ENCODE measurements at regions of chr2 and their contacts with region 1.

Region 1: GRCh38 chr2:182186132-182186735 is 200.6 kb downstream of the PPP1R1C start:
- DNase-seq: peak in 1 of 2 donors; percentile 69
- H3K4me3 ChIP-seq: no peak overlapping the region
- H3K27ac ChIP-seq: no peak overlapping the region
- H3K4me1 ChIP-seq: no peaks in the 10 kb centered on the region
- H3K27me3 ChIP-seq: no peaks in the 10 kb centered on the region
- CTCF ChIP-seq: peak in 5 of 7 experiments; percentile 64 to 93 (median 81)
- EP300 ChIP-seq: no peak
- POLR2A ChIP-seq: no peak

Region 2: DNA sequence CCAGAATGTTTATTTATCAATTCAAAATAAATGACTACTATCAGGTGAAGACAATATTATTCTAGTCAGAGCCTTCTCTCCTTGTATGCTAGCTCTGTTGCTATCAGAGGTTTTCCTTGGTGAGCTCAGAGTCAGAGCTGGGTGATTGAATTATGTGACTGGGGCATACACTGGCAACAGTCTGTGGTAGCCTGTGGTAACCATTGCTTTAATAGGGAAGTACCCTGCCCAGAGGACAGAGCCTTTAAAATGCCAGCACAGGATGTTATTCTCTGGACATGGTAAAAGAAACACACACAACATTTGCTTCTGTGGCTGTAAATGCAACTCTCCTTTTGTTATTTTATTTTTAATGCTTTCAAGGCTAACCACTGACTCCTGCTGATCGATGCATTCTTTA is 75.9 kb before region 1 on chr2:
- intact Hi-C with region 1: no loop called
- DNase-seq: no peak
- H3K4me3 ChIP-seq: no peak overlapping the region
- H3K27ac ChIP-seq: no peak overlapping the region
- H3K4me1 ChIP-seq: no peaks in the 10 kb centered on the region
- H3K27me3 ChIP-seq: no peaks in the 10 kb centered on the region
- CTCF ChIP-seq: no peak
- EP300 ChIP-seq: no peak
- POLR2A ChIP-seq: no peak

Region 3: DNA sequence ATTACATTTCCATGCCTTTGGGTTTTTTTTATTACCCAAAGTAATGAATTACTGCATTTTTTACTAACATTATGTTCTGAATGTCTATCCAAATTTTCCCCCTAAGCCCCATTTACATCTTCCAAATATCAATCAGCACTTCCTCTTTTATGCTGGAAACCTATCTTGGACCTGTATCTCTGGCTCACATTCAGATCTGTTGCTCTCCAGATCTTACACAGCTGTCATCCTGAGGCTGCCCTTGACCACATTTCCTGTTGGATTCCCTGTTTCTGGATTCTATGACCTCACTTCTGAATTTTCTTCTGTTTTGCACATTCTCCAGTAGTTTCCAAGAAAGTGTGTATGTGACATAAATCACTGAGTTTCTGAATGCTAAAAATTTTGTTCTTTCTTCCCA is 93.9 kb after region 1 on chr2:
- intact Hi-C with region 1: no loop called
- DNase-seq: peak in 1 of 2 donors; percentile 32
- H3K4me3 ChIP-seq: no peak overlapping the region
- H3K27ac ChIP-seq: no peak overlapping the region
- H3K4me1 ChIP-seq: no peaks in the 10 kb centered on the region
- H3K27me3 ChIP-seq: no peaks in the 10 kb centered on the region
- CTCF ChIP-seq: no peak
- EP300 ChIP-seq: no peak
- POLR2A ChIP-seq: no peak

Region 4: GRCh38 chr2:182650704-182651103 is 464.5 kb after region 1 on chr2:
- intact Hi-C with region 1: loop called (anchors 5 kb)
- DNase-seq: peak in 1 of 2 donors; percentile 61
- H3K4me3 ChIP-seq: no peak overlapping the region
- H3K27ac ChIP-seq: no peak overlapping the region
- H3K4me1 ChIP-seq: peaks cover 0 to 5% (median 2%) of the 10 kb centered on the region in 4 donors
- H3K27me3 ChIP-seq: no peaks in the 10 kb centered on the region
- CTCF ChIP-seq: peak in 4 of 7 experiments; percentile 33 to 57 (median 46)
- EP300 ChIP-seq: no peak
- POLR2A ChIP-seq: no peak

Region 5: GRCh38 chr2:183093857-183094657 is 907.8 kb after region 1 on chr2:
- intact Hi-C with region 1: no loop called
- DNase-seq: no peak
- H3K4me3 ChIP-seq: no peak overlapping the region
- H3K27ac ChIP-seq: no peak overlapping the region
- H3K4me1 ChIP-seq: peaks cover 0 to 11% (median 0%) of the 10 kb centered on the region in 4 donors
- H3K27me3 ChIP-seq: no peaks in the 10 kb centered on the region
- CTCF ChIP-seq: peak in 2 of 7 experiments; percentile 21 to 39
- EP300 ChIP-seq: no peak
- POLR2A ChIP-seq: no peak

Measured in stomach (tissue), 19 donors.